ENCODE measurements at regions of chr10 and their contacts with region 1.

Region 1: GRCh38 chr10:89029785-89030437 is 39.3 kb downstream of the FAS start:
- DNase-seq: peak; percentile 62 to 67
- H3K4me3 ChIP-seq: no peak overlapping the region
- H3K4me3 Mint-ChIP-seq: no peak overlapping the region
- H3K27ac Mint-ChIP-seq: no peak overlapping the region
- H3K4me1 ChIP-seq: no peaks in the 10 kb centered on the region
- H3K4me1 Mint-ChIP-seq: no peaks in the 10 kb centered on the region
- H3K27me3 ChIP-seq: no peaks in the 10 kb centered on the region
- H3K27me3 Mint-ChIP-seq: peaks cover 8% of the 10 kb centered on the region
- CTCF ChIP-seq: peak; percentile 80 to 82

Region 2: DNA sequence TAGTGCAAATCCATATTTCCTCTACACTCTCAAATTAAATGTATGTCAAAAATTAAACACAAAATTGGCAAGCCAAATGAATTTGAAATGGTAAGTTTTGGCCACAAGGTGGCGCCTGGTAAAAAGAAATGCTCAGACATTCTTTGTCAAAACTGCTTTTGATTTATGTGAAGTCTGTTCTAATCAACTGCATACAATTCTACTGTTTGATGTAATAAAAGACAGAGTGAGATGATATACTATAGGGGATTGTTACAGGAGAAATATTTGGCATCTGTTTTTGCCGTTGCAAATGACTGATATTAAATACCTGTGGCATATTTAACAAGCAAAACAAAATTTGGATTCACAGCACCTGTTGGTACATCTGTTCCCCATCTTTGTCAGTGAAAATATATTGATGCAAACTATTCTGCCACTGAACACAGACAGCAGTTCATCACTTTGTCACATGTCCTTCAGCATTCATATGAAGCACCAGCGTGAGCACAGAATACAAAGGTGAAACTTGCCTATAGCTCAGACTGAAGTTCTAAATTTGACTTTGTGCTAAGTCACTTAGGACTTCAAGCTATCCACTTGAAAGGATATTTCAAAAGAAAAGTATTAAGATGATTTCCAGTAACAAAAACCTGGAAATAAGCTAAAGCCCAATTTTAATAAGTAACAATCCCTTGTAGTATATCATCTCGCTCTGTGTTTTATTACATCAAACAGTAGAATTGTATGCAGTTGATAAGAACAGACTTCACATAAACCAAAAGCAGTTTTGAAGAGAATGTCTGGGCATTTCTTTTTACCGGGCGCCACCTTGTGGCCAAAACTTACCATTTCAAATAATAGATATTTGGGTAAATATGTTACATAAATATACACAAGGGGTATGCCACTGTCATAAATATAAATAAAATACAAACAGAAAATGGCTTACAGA is 187.4 kb after region 1 on chr10:
- CTCF ChIA-PET with region 1: no interaction called
- POLR2A ChIA-PET with region 1: no interaction called
- intact Hi-C with region 1: loop called (anchors 1 kb)
- DNase-seq: peak in 1 of 2 experiments; percentile 57
- H3K4me3 ChIP-seq: no peak overlapping the region
- H3K4me3 Mint-ChIP-seq: no peak overlapping the region
- H3K27ac Mint-ChIP-seq: no peak overlapping the region
- H3K4me1 ChIP-seq: 0 out of 2 replicates have a peak, but pooled peaks cover 4% of the 10 kb centered on the region
- H3K4me1 Mint-ChIP-seq: no peaks in the 10 kb centered on the region
- H3K27me3 ChIP-seq: no peaks in the 10 kb centered on the region
- H3K27me3 Mint-ChIP-seq: no peaks in the 10 kb centered on the region
- CTCF ChIP-seq: peak; percentile 63 to 64

Measured in Caco-2 (cell line).